Activated naive CD4-positive, alpha-beta T cell treated with anti-CD3 and anti-CD28 coated beads, Interleukin-2, amount 10 ng/mL, durations not matched to agents 7 days and 5 days (primary cell): ENCODE measurements at regions of chr10 and their contacts with region 1.

Region 1: GRCh38 chr10:84264611-84265141 is 19.8 kb downstream of the RGR start:
- DNase-seq: peak; percentile 82
- H3K4me3 Mint-ChIP-seq: no peak overlapping the region
- H3K27ac Mint-ChIP-seq: no peak overlapping the region
- H3K4me1 Mint-ChIP-seq: peaks cover 16% of the 10 kb centered on the region
- H3K27me3 Mint-ChIP-seq: peaks cover 29% of the 10 kb centered on the region

Region 2: GRCh38 chr10:84179059-84179710 is 85.5 kb before region 1 on chr10:
- CTCF ChIA-PET with region 1: no interaction called
- DNase-seq: no peak
- H3K4me3 Mint-ChIP-seq: no peak overlapping the region
- H3K27ac Mint-ChIP-seq: no peak overlapping the region
- H3K4me1 Mint-ChIP-seq: peaks cover 6% of the 10 kb centered on the region
- H3K27me3 Mint-ChIP-seq: no peaks in the 10 kb centered on the region

Region 3: DNA sequence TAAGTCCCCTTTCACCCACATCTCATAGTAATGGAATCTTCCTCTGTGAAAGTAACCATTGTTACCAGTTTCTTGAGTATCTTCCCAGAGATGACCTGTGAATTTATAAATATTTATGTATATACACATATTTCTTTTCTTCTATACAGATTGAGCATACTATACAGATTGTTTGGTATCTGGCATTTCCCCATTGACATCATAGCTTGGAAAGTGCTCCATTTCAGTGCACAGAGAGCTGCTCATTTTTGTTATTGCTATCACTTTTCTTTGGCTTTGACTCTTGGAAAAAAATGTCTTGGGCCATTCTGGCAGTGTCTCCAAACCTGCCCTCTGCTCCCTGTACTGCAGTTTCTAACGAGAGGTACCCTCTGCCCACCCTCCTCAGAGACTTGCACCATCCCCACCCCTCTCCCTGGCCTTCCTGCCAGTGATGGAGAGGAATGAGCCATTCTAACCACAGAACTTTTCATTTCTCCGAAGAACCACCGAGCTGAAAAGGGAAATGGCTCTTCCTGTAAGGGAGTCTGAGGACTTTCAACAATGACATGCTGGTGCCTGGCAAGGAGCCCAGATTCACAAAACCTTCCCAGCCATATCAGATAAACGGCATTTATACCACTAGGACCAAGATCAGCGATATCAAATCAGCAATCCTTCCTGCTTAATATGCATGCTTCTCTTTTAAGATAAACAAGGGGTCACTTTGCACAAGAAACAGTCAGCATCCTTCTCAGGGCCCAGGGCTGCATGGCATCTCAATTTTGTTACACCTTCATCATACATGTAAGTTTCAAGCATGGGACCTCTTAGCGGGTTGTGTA is 44.0 kb after region 1 on chr10:
- CTCF ChIA-PET with region 1: interaction called, 13 read pairs
- DNase-seq: peak; percentile 41
- H3K4me3 Mint-ChIP-seq: peak overlapping the region; percentile 31
- H3K27ac Mint-ChIP-seq: peak overlapping the region; percentile 42
- H3K4me1 Mint-ChIP-seq: peaks cover 48% of the 10 kb centered on the region
- H3K27me3 Mint-ChIP-seq: peaks cover 4% of the 10 kb centered on the region

Region 4: DNA sequence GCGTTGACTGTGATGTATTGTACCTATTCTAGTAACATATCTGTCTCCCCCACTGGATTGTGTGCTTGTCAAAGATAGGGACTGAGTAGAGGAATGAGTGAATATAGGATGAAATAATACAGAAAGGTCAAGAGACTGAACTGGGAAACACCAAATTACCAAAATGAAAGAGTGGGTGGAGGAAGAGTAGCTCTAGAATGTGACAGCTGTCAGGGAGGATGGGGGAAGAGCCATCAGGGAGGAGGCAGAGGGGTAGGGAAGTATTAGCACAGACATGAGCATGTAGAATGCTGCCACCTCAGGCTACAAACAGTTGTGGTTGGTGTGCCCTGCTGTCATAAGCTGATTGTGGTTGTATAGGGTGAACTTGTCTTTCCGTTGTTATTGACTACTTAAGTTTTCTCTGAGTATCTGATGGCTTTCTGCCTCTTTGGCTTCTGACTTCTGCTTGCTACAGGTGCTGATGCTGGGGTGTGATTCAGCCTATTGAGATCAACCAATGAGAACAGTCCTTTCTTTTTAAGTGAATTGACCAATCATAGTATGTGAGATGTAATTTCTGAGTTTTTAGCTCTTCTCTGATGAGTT is 69.3 kb after region 1 on chr10:
- CTCF ChIA-PET with region 1: interaction called, 23 read pairs
- DNase-seq: peak; percentile 78
- H3K4me3 Mint-ChIP-seq: peak overlapping the region; percentile 24
- H3K27ac Mint-ChIP-seq: peak overlapping the region; percentile 85
- H3K4me1 Mint-ChIP-seq: peaks cover 33% of the 10 kb centered on the region
- H3K27me3 Mint-ChIP-seq: no peaks in the 10 kb centered on the region

Region 5: GRCh38 chr10:84352251-84352842 is 87.7 kb after region 1 on chr10:
- CTCF ChIA-PET with region 1: interaction called, 22 read pairs
- DNase-seq: peak; percentile 77
- H3K4me3 Mint-ChIP-seq: no peak overlapping the region
- H3K27ac Mint-ChIP-seq: no peak overlapping the region
- H3K4me1 Mint-ChIP-seq: peaks cover 49% of the 10 kb centered on the region
- H3K27me3 Mint-ChIP-seq: no peaks in the 10 kb centered on the region

Region 6: GRCh38 chr10:84429926-84430520 is 165.3 kb after region 1 on chr10:
- CTCF ChIA-PET with region 1: interaction called, 22 read pairs
- DNase-seq: peak; percentile 79
- H3K4me3 Mint-ChIP-seq: no peak overlapping the region
- H3K27ac Mint-ChIP-seq: no peak overlapping the region
- H3K4me1 Mint-ChIP-seq: peaks cover 14% of the 10 kb centered on the region
- H3K27me3 Mint-ChIP-seq: no peaks in the 10 kb centered on the region

Region 7: GRCh38 chr10:84537447-84537931 is 272.8 kb after region 1 on chr10:
- CTCF ChIA-PET with region 1: interaction called, 333 read pairs
- DNase-seq: peak; percentile 32
- H3K4me3 Mint-ChIP-seq: no peak overlapping the region
- H3K27ac Mint-ChIP-seq: no peak overlapping the region
- H3K4me1 Mint-ChIP-seq: peaks cover 16% of the 10 kb centered on the region
- H3K27me3 Mint-ChIP-seq: peaks cover 39% of the 10 kb centered on the region